ENCODE measurements at regions of chr4 and their contacts with region 1.

Region 1: GRCh38 chr4:155085843-155086530 is 122.4 kb upstream of the NPY2R start:
- DNase-seq: no peak

Region 2: GRCh38 chr4:154634058-154634457 is 451.9 kb before region 1 on chr4:
- intact Hi-C with region 1: no loop called
- DNase-seq: no peak

Region 3: GRCh38 chr4:155042014-155042413 is 44.0 kb before region 1 on chr4:
- intact Hi-C with region 1: loop called (anchors 5 kb)
- DNase-seq: no peak